HepG2 (cell line): ENCODE measurements at regions of chr2 and their contacts with region 1.

Region 1: DNA sequence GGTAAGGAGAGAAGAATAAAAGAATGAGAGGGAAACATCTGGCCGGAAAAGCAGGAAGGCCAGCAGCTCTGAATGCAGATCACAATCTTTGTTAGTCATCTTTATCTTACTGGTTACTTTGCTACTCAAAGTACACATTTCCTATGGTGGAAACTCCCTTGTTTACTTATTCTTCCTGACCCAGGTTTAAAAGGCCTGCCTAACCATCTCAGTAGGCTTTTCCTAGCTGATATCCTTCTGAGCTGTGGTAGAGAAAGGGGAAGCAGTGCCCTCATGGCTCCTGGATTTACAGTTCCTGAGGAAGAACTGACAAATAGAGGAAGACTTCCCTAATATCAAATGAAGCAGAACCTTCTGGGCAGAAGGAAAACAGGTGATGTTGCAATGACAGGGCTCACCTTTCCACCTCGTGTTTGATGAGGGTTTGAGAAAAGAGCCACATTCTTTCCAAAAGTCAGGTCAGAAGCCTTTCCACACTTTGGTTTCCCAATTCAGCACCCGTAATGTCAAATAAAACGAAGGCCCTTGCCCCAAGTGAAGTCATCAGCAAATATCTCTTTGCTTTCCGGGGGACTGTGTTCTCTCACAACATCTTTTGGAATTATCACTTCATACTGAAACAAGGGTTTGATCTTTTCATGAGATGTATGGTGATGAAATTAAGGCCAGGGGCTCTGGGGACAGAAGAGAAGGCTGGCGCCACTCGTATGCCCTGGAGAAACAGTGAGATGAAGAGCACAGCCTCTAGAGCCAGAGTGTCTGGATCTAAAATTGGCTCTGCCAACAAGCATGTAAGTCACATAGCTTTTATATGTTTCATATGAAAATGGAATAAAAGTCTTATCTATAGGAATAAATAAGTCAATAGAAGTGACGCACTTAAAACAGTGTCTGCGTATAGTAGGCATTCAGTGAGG is 26.7 kb upstream of the APOB start:
- DNase-seq: peak; percentile 97
- ATAC-seq: peak; percentile 86
- H3K4me3 ChIP-seq: peak overlapping the region; percentile 35 to 59 (median 45)
- H3K27ac ChIP-seq: peak overlapping the region; percentile 73
- H3K4me1 ChIP-seq: peaks cover 77% of the 10 kb centered on the region
- H3K27me3 ChIP-seq: no peaks in the 10 kb centered on the region
- CTCF ChIP-seq: 0 out of 2 replicates have a peak, but pooled peaks have one; percentile 24
- EP300 ChIP-seq: peak; percentile 61 to 83; a peak in 3 of 4 replicates
- POLR2A ChIP-seq: peak; percentile 82 to 88
- RAD21 ChIP-seq: no peak

Region 2: GRCh38 chr2:20976527-20976926 is 94.1 kb before region 1 on chr2:
- CTCF ChIA-PET with region 1: no interaction called
- POLR2A ChIA-PET with region 1: no interaction called
- in situ Hi-C with region 1: no loop called
- intact Hi-C with region 1: no loop called
- DNase-seq: no peak
- ATAC-seq: no peak
- H3K4me3 ChIP-seq: no peak overlapping the region
- H3K27ac ChIP-seq: no peak overlapping the region
- H3K4me1 ChIP-seq: no peaks in the 10 kb centered on the region
- H3K27me3 ChIP-seq: no peaks in the 10 kb centered on the region
- CTCF ChIP-seq: no peak
- EP300 ChIP-seq: no peak
- POLR2A ChIP-seq: no peak
- RAD21 ChIP-seq: no peak

Region 3: GRCh38 chr2:20999906-21000645 is 70.5 kb before region 1 on chr2:
- CTCF ChIA-PET with region 1: no interaction called
- POLR2A ChIA-PET with region 1: interaction called, 10 read pairs
- in situ Hi-C with region 1: no loop called
- intact Hi-C with region 1: no loop called
- DNase-seq: no peak
- ATAC-seq: no peak
- H3K4me3 ChIP-seq: no peak overlapping the region
- H3K27ac ChIP-seq: no peak overlapping the region
- H3K4me1 ChIP-seq: peaks cover 13% of the 10 kb centered on the region; the same call in 1 of the 2 replicates
- H3K27me3 ChIP-seq: no peaks in the 10 kb centered on the region
- CTCF ChIP-seq: no peak
- EP300 ChIP-seq: 0 out of 4 replicates have a peak, but pooled peaks of 1 of the 2 experiments have one; percentile 6
- POLR2A ChIP-seq: peak; percentile 73 to 84
- RAD21 ChIP-seq: peak; percentile 35; the same call in 1 of the 2 replicates

Region 4: GRCh38 chr2:21025690-21026478 is 44.7 kb before region 1 on chr2:
- CTCF ChIA-PET with region 1: no interaction called
- POLR2A ChIA-PET with region 1: interaction called, 10 read pairs
- in situ Hi-C with region 1: no loop called
- intact Hi-C with region 1: no loop called
- DNase-seq: no peak
- ATAC-seq: peak; percentile 1
- H3K4me3 ChIP-seq: no peak overlapping the region
- H3K27ac ChIP-seq: peak overlapping the region; percentile 31
- H3K4me1 ChIP-seq: peaks cover 92% of the 10 kb centered on the region
- H3K27me3 ChIP-seq: no peaks in the 10 kb centered on the region
- CTCF ChIP-seq: no peak
- EP300 ChIP-seq: no peak
- POLR2A ChIP-seq: peak; percentile 63 to 72
- RAD21 ChIP-seq: no peak

Region 5: GRCh38 chr2:21032338-21033236 is 38.0 kb before region 1 on chr2:
- CTCF ChIA-PET with region 1: no interaction called
- POLR2A ChIA-PET with region 1: interaction called, 236 read pairs
- in situ Hi-C with region 1: no loop called
- intact Hi-C with region 1: no loop called
- DNase-seq: no peak
- ATAC-seq: peak; percentile 8
- H3K4me3 ChIP-seq: peak overlapping the region in 1 of 3 experiments; percentile 14; a peak in 1 of 6 replicates
- H3K27ac ChIP-seq: peak overlapping the region; percentile 8
- H3K4me1 ChIP-seq: peaks cover 99% of the 10 kb centered on the region
- H3K27me3 ChIP-seq: no peaks in the 10 kb centered on the region
- CTCF ChIP-seq: no peak
- EP300 ChIP-seq: no peak
- POLR2A ChIP-seq: peak; percentile 59 to 73; a peak in 3 of 4 replicates
- RAD21 ChIP-seq: no peak

Region 6: GRCh38 chr2:21052044-21052443 is 18.6 kb before region 1 on chr2:
- CTCF ChIA-PET with region 1: no interaction called
- POLR2A ChIA-PET with region 1: interaction called, 236 read pairs
- in situ Hi-C with region 1: no loop called
- intact Hi-C with region 1: loop called (anchors 1 kb)
- DNase-seq: peak; percentile 89
- ATAC-seq: peak; percentile 38
- H3K4me3 ChIP-seq: no peak overlapping the region
- H3K27ac ChIP-seq: no peak overlapping the region
- H3K4me1 ChIP-seq: peaks cover 78% of the 10 kb centered on the region
- H3K27me3 ChIP-seq: no peaks in the 10 kb centered on the region
- CTCF ChIP-seq: no peak
- EP300 ChIP-seq: peak in 1 of 2 experiments; percentile 52; a peak in 1 of 4 replicates
- POLR2A ChIP-seq: no peak
- RAD21 ChIP-seq: no peak

Region 7: GRCh38 chr2:21096458-21096857 is 25.9 kb after region 1 on chr2:
- CTCF ChIA-PET with region 1: no interaction called
- POLR2A ChIA-PET with region 1: interaction called, 19 read pairs
- in situ Hi-C with region 1: no loop called
- intact Hi-C with region 1: loop called (anchors 2 kb)
- DNase-seq: peak; percentile 89
- ATAC-seq: peak; percentile 75
- H3K4me3 ChIP-seq: no peak overlapping the region
- H3K27ac ChIP-seq: peak overlapping the region; percentile 36
- H3K4me1 ChIP-seq: peaks cover 71% of the 10 kb centered on the region
- H3K27me3 ChIP-seq: no peaks in the 10 kb centered on the region
- CTCF ChIP-seq: no peak
- EP300 ChIP-seq: peak; percentile 34 to 37; a peak in 1 of 4 replicates
- POLR2A ChIP-seq: no peak
- RAD21 ChIP-seq: no peak

Region 8: DNA sequence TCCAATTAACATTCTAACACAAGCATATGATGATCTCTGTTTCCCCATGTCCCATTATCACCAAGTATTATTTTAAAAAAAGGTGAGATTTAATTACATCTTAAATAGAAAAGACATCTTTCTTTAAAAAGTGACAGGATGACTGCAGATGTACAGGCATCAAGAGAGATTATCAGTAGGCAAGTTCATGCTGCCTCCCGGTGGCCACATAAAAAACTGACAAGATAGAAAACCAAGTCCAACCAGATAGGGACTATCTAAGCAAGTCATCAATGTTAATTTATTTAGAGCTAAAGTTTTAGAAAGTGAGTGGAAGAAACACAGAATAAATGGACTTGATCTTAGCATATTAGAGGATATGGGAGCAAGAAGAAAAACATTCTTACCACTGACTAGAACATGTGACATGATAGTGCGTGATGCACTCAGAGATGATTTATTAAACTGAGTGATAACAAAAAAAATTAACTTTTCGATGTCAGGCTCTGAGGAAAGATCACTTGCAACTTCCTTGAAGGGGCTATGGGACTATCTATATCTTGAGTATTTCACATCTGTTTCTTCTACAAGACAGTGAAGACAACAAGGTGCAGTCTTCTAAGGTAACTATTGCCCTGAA is 47.8 kb after region 1 on chr2:
- CTCF ChIA-PET with region 1: interaction called, 7 read pairs
- POLR2A ChIA-PET with region 1: interaction called, 16 read pairs
- in situ Hi-C with region 1: loop called (anchors 5 kb)
- intact Hi-C with region 1: loop called (anchors 1 kb)
- DNase-seq: peak; percentile 81
- ATAC-seq: peak; percentile 98
- H3K4me3 ChIP-seq: no peak overlapping the region
- H3K27ac ChIP-seq: no peak overlapping the region
- H3K4me1 ChIP-seq: peaks cover 22% of the 10 kb centered on the region
- H3K27me3 ChIP-seq: no peaks in the 10 kb centered on the region
- CTCF ChIP-seq: peak; percentile 89
- EP300 ChIP-seq: peak in 1 of 2 experiments; percentile 36; a peak in 1 of 4 replicates
- POLR2A ChIP-seq: no peak
- RAD21 ChIP-seq: peak; percentile 91